Psoas muscle (tissue), 8 donors: ENCODE measurements at regions of chr6 and their contacts with region 1.

Region 1: DNA sequence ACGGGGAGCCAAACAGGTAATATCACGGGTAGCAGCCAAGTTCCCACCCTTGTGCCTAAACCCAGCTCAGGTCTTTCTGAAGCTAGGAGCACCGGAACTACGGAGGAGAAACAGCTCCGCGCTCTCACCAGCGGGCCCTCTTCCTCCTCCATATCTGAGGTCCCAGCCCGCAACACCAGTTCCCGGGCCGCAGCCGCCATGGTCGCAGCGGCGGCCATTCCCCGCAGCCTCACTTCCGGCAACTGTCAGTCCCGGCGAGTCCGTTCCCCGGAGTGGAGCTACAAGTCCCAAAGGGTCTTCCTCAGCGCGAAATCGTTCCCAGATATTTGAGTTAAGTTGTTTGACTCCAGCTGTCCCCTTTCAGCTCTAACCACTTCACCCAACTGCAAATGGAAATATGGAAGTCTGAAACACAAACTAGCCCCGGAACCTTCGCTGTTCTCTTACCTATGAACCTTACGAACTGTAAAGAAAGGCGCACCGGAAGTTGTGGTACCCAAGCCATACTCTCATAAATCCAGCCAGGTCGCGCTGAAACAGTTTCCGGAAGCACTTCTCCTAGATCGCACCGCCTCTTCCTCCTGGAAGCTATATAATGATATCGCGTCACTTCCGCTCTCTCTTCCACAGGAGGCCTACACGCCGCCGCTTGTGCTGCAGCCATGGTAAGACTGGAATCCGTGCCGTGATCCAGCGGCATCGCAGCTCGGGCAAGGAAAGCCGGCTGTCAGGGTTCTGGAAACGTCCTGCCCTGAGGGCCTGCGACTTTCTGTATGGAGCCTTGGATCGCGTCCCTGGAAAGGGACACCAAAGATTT is at the starts of genes RPS18 and VPS52:
- DNase-seq: peak; percentile 89 to 94
- ATAC-seq: peak; percentile 94 to 97 (median 96)
- H3K4me3 ChIP-seq: peak within 1 kb of the TSS; percentile 81
- H3K27ac ChIP-seq: peak within 1 kb of the TSS; percentile 97
- H3K4me1 ChIP-seq: peaks cover 50% of the 10 kb centered on the region
- H3K27me3 ChIP-seq: no peaks in the 10 kb centered on the region
- CTCF ChIP-seq: no peak
- total RNA-seq, gene RPS18: 1,108 to 1,410 (median 1,267) TPM
- total RNA-seq, gene VPS52: 35.7 to 52.5 (median 46.8) TPM

Region 2: GRCh38 chr6:33407132-33407718 is 135.6 kb after region 1 on chr6:
- intact Hi-C with region 1: loop called in 1 of 2 experiments (anchors 10 kb)
- DNase-seq: no peak
- ATAC-seq: no peak
- H3K4me3 ChIP-seq: no peak overlapping the region
- H3K27ac ChIP-seq: no peak overlapping the region
- H3K4me1 ChIP-seq: peaks cover 5% of the 10 kb centered on the region
- H3K27me3 ChIP-seq: no peaks in the 10 kb centered on the region
- CTCF ChIP-seq: peak; percentile 7